Activated T-helper 1 cell treated with anti-CD3 and anti-CD28 coated beads, Interleukin-12 subunit alpha, Interleukin-12 subunit beta, Interleukin-2, Interleukin-4 antibody, amounts not matched to agents 30 ng/mL and 10 ng/mL and 1 ng/mL, durations not matched to agents 14 hours and 24 hours and 36 hours (primary cell): ENCODE measurements at regions of chr14 and their contacts with region 1.

Region 1: GRCh38 chr14:63437953-63438757 is 105.0 kb downstream of the PPP2R5E start:
- DNase-seq: peak; percentile 30
- H3K4me3 Mint-ChIP-seq: peak overlapping the region; percentile 61
- H3K27ac Mint-ChIP-seq: peak overlapping the region; percentile 53
- H3K4me1 Mint-ChIP-seq: peaks cover 45% of the 10 kb centered on the region
- H3K27me3 Mint-ChIP-seq: no peaks in the 10 kb centered on the region

Region 2: DNA sequence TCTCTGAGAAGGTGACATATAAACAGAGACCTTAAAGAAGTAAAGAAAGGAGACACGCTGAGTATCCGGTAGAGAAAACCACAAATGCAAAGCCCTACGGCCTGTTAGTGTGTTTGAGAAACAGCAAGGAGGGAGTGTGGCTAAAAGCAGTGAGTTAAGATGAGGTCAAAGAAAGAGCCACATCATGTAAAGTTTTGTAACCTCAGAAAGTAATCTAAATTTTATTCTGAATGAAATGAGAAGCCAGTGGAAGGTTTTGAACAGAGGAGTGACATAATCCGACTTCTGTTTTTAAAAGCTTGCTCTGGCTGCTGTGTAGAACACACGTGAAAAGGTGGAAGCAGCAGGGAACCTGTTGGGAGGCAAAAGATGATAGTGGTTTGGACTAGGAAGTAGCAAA is 72.4 kb after region 1 on chr14:
- intact Hi-C with region 1: loop called (anchors 2 kb)
- DNase-seq: peak; percentile 14
- H3K4me3 Mint-ChIP-seq: peak overlapping the region; percentile 32
- H3K27ac Mint-ChIP-seq: peak overlapping the region; percentile 87
- H3K4me1 Mint-ChIP-seq: peaks cover 63% of the 10 kb centered on the region
- H3K27me3 Mint-ChIP-seq: no peaks in the 10 kb centered on the region